Natural killer cell (primary cell): ENCODE measurements at regions of chr4 and their contacts with region 1.

Region 1: GRCh38 chr4:1579901-1580691 is 104.0 kb downstream of the FAM53A start:
- DNase-seq: peak; percentile 92 to 94
- ATAC-seq: peak; percentile 76 to 89 (median 80)
- H3K4me3 ChIP-seq: peak overlapping the region; percentile 60
- H3K4me3 Mint-ChIP-seq: peak overlapping the region; percentile 82
- H3K27ac ChIP-seq: peak overlapping the region; percentile 67
- H3K27ac Mint-ChIP-seq: peak overlapping the region; percentile 71 to 77
- H3K4me1 ChIP-seq: peaks cover 10% of the 10 kb centered on the region
- H3K4me1 Mint-ChIP-seq: peaks cover 0 to 8% of the 10 kb centered on the region in 2 donors
- H3K27me3 ChIP-seq: no peaks in the 10 kb centered on the region
- H3K27me3 Mint-ChIP-seq: no peaks in the 10 kb centered on the region
- CTCF ChIP-seq: no peak

Region 2: DNA sequence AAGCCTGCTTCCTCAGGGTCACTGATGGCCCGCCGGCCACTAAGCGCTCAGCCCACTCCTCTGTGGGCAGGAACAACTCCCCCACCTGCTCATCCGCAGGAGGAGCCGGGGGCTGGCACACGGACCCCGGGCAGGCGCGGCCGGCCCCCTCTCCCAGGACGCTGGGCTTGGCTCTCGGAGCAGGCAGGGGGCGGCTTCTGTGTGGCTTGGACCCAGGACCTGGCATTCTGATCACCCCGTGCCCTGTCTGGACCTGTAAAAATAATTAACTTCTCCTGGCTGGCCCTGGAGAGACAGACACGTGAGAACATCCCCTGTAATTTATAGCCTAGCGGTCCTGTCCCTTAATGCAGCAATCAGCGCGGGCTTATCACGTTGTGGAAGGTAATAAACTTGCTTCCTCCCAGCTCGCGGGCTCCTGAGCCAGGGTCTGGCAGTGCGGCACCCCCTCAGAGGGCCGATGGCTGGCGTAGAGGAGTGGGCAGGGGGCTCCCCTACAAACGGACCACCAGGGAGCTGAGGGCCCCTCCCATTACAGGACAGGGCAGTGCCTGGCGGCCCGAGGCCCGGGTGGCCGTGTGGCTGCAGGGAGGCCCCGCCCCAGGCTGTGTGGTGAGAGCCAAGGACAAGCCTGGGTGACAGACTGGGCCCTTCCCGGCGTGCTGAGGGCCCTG is 89.3 kb before region 1 on chr4:
- intact Hi-C with region 1: no loop called
- DNase-seq: no peak
- ATAC-seq: no peak
- H3K4me3 ChIP-seq: no peak overlapping the region
- H3K4me3 Mint-ChIP-seq: no peak overlapping the region
- H3K27ac ChIP-seq: no peak overlapping the region
- H3K27ac Mint-ChIP-seq: no peak overlapping the region
- H3K4me1 ChIP-seq: no peaks in the 10 kb centered on the region
- H3K4me1 Mint-ChIP-seq: no peaks in the 10 kb centered on the region
- H3K27me3 ChIP-seq: no peaks in the 10 kb centered on the region
- H3K27me3 Mint-ChIP-seq: peaks cover 0 to 7% of the 10 kb centered on the region in 2 donors
- CTCF ChIP-seq: no peak

Region 3: DNA sequence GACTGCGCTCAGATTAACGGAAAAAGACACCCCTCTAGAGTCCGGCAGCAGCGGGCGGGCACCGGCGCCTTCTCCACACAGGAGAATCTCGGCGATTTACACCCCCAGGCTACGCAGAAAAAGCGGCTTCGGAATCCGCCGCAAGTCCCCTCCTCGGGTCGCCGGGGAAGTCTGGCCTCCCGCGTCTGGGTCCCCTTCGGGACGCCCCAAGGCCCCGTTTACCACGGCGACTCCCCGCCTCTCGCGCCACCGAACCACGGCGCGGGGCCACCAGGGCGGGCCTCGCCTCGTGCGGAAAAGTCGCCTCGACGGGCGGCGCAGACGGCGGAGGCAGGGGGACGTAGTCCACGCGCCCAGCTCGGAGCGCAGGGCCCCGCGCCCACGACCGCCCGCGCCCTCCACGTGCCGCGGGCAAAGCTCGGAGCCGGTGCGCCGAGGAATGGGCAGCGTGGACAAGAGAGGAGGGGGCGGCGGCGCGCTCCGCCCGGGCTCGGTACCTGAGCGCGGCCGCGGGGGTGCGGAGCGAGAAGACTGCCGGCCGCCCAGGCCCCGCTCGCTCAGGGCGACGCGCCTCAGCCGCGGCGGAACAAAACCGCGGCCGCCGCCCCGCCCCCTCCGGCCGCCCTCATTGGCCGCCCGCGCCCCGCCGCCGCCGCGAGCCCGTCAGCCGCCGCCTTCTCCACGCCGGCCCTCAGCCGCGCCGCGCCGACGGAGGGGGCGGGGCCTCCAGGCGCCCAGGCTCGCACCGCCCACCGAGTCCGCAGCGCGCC is 103.8 kb after region 1 on chr4 and contains the start of gene FAM53A:
- intact Hi-C with region 1: no loop called
- DNase-seq: peak; percentile 39 to 94
- ATAC-seq: peak; percentile 93 to 98 (median 96)
- H3K4me3 ChIP-seq: peak within 1 kb of the TSS; percentile 48
- H3K4me3 Mint-ChIP-seq: peak within 1 kb of the TSS; percentile 90
- H3K27ac ChIP-seq: peak within 1 kb of the TSS; percentile 49
- H3K27ac Mint-ChIP-seq: peak within 1 kb of the TSS; percentile 79 to 82
- H3K4me1 ChIP-seq: peaks cover 17% of the 10 kb centered on the region
- H3K4me1 Mint-ChIP-seq: peaks cover 7 to 11% of the 10 kb centered on the region in 2 donors
- H3K27me3 ChIP-seq: no peaks in the 10 kb centered on the region
- H3K27me3 Mint-ChIP-seq: no peaks in the 10 kb centered on the region
- CTCF ChIP-seq: no peak
- total RNA-seq, gene FAM53A: 1.9 to 2.9 (median 2.3) TPM

Region 4: GRCh38 chr4:1712216-1713002 is 132.3 kb after region 1 on chr4 and contains the start of gene SLBP:
- intact Hi-C with region 1: loop called (anchors 5 kb)
- DNase-seq: peak; percentile 94 to 99
- ATAC-seq: peak; percentile 82 to 93 (median 84)
- H3K4me3 ChIP-seq: peak within 1 kb of the TSS; percentile 65
- H3K4me3 Mint-ChIP-seq: peak within 1 kb of the TSS; percentile 95
- H3K27ac ChIP-seq: peak within 1 kb of the TSS; percentile 73
- H3K27ac Mint-ChIP-seq: peak within 1 kb of the TSS; percentile 95 to 96
- H3K4me1 ChIP-seq: peaks cover 47% of the 10 kb centered on the region
- H3K4me1 Mint-ChIP-seq: peaks cover 10 to 60% of the 10 kb centered on the region in 2 donors
- H3K27me3 ChIP-seq: no peaks in the 10 kb centered on the region
- H3K27me3 Mint-ChIP-seq: no peaks in the 10 kb centered on the region
- CTCF ChIP-seq: no peak
- total RNA-seq, gene SLBP: 29.5 to 38.8 (median 38.6) TPM